A673 (cell line): ENCODE measurements at regions of chr3 and their contacts with region 1.

Region 1: DNA sequence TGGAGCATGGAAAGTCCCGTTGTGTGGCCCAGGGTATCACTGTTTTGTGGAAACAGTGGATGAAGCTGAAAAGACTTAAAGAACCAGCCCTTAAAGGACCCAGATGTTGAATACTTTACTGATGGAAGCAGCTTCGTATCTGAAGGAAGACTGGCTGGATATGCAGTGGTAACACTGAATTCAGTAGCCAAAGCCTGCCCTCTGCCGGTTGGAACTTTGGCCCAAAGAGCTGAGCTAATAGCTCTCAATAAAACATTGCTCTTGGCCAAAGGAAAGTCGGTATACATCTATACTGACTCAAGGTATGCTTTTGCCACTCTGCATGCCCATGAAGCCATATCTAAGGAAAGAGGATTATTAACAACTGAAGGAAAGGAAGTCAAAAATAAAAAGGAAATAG is 885.4 kb downstream of the PDCD6IP start:
- DNase-seq: peak; percentile 88
- H3K4me3 ChIP-seq: no peak overlapping the region
- H3K27ac ChIP-seq: peak overlapping the region; percentile 71
- H3K4me1 ChIP-seq: peaks cover 18% of the 10 kb centered on the region
- H3K27me3 ChIP-seq: no peaks in the 10 kb centered on the region
- CTCF ChIP-seq: peak; percentile 71

Region 2: DNA sequence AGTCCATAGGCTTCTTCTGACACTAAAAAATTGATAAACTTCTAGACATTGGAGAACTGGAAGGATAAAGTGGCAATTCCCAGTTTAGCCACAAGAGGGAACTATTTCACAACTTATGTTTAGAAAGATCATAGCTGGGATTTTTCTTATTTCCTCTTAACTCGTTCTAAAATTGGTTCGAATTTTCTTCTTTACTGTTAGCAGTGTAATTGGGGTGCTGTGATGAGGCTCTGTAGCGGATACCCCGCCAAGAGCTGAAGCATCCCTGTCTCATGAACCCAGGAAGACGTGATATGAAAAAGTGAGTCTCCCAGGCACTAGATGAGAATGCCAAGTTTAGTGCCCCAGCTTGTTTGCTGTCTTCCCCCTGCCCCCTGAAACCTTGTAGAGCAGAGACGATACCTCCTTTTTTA is 800.3 kb before region 1 on chr3:
- CTCF ChIA-PET with region 1: interaction called, 18 read pairs
- POLR2A ChIA-PET with region 1: no interaction called
- intact Hi-C with region 1: loop called (anchors 2 kb)
- DNase-seq: peak; percentile 85
- H3K4me3 ChIP-seq: peak overlapping the region; percentile 15
- H3K27ac ChIP-seq: peak overlapping the region; percentile 81
- H3K4me1 ChIP-seq: peaks cover 29% of the 10 kb centered on the region
- H3K27me3 ChIP-seq: no peaks in the 10 kb centered on the region
- CTCF ChIP-seq: peak; percentile 87

Region 3: GRCh38 chr3:33954956-33955355 is 728.9 kb before region 1 on chr3:
- CTCF ChIA-PET with region 1: no interaction called
- POLR2A ChIA-PET with region 1: no interaction called
- intact Hi-C with region 1: loop called (anchors 5 kb)
- DNase-seq: peak; percentile 80
- H3K4me3 ChIP-seq: no peak overlapping the region
- H3K27ac ChIP-seq: peak overlapping the region; percentile 98
- H3K4me1 ChIP-seq: peaks cover 55% of the 10 kb centered on the region
- H3K27me3 ChIP-seq: no peaks in the 10 kb centered on the region
- CTCF ChIP-seq: peak; percentile 66

Region 4: DNA sequence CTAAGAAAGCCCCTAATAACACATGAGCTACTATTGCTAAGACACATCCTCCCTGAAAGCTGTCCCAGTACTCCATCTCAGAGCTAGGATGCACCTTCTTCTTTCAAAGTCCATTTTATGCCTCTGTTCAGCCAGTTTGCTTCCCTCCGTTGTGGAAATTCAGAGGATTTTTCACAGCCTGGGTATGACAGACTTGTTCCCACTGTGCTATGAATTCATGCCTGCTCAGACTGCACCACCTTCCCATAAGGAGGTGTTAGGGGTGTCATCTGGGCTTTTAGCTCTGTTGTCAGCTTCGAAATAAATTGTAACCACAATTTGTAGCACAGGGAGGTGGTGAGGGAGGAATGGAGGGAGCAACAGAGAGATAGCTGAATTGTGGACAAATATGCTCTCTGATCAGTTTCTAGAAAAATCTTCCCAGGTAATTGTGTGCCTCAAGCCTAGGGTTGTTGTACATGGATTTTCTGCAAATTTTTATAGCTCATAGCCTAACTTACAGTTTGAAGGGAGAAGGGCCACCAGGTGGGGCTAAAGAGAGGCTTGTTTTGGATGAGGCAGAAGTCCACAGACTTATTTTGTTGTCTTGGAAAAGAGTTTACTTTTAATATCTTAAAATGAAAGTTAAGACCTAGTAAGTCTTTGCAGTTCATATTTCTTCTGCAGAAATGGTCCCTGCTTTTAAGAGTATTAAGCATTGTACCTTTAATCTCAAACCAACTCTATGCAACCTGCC is 423.4 kb before region 1 on chr3:
- CTCF ChIA-PET with region 1: interaction called, 14 read pairs
- POLR2A ChIA-PET with region 1: no interaction called
- intact Hi-C with region 1: loop called (anchors 5 kb)
- DNase-seq: peak; percentile 89
- H3K4me3 ChIP-seq: no peak overlapping the region
- H3K27ac ChIP-seq: peak overlapping the region; percentile 97
- H3K4me1 ChIP-seq: peaks cover 99% of the 10 kb centered on the region
- H3K27me3 ChIP-seq: no peaks in the 10 kb centered on the region
- CTCF ChIP-seq: peak; percentile 83

Region 5: DNA sequence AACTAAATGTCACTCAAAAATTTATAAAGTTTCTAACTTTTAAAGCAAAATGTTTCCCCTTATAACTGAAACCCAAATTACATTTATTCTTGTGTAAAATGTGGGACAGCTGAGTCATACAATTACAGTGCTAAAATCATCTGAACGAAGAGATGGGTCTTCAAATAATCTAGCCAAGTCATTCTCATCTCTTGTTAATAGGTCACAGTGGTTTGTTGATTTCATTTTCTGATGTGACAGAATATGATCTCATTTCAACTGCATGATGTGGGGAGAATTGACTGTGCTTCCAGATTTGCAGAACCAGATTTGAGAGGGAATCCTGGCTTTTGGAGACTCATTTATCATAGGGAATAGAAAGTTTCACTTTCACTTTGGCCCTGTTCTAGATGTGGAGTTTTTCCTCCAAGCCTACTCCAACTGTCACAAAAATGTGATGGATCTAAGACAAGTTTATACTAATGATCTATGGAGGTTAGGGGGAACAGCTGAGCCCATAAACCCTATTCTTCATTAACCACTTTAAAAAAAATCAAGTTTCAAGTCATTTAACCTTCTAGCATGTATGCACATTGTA is 200.5 kb before region 1 on chr3:
- CTCF ChIA-PET with region 1: no interaction called
- POLR2A ChIA-PET with region 1: no interaction called
- intact Hi-C with region 1: loop called (anchors 5 kb)
- DNase-seq: peak; percentile 6
- H3K4me3 ChIP-seq: peak overlapping the region; percentile 10
- H3K27ac ChIP-seq: no peak overlapping the region
- H3K4me1 ChIP-seq: peaks cover 14% of the 10 kb centered on the region
- H3K27me3 ChIP-seq: no peaks in the 10 kb centered on the region
- CTCF ChIP-seq: no peak